CD8-positive, alpha-beta T cell (primary cell): ENCODE measurements at regions of chr12 and their contacts with region 1.

Region 1: GRCh38 chr12:53180220-53180930 is at the starts of genes CSAD and ZNF740:
- DNase-seq: peak; percentile 93 to 99 (median 98)
- ATAC-seq: peak; percentile 96
- H3K4me3 ChIP-seq: peak within 1 kb of the TSS; percentile 78 to 84
- H3K4me3 Mint-ChIP-seq: peak within 1 kb of the TSS; percentile 86
- H3K27ac ChIP-seq: peak within 1 kb of the TSS; percentile 75 to 88
- H3K27ac Mint-ChIP-seq: peak within 1 kb of the TSS; percentile 98
- H3K4me1 ChIP-seq: peaks cover 51% of the 10 kb centered on the region
- H3K4me1 Mint-ChIP-seq: peaks cover 52% of the 10 kb centered on the region
- H3K27me3 ChIP-seq: no peaks in the 10 kb centered on the region
- H3K27me3 Mint-ChIP-seq: no peaks in the 10 kb centered on the region
- CTCF ChIP-seq: no peak
- total RNA-seq, gene CSAD: 28.0 to 29.6 TPM
- total RNA-seq, gene ZNF740: 24.8 to 24.9 TPM

Region 2: DNA sequence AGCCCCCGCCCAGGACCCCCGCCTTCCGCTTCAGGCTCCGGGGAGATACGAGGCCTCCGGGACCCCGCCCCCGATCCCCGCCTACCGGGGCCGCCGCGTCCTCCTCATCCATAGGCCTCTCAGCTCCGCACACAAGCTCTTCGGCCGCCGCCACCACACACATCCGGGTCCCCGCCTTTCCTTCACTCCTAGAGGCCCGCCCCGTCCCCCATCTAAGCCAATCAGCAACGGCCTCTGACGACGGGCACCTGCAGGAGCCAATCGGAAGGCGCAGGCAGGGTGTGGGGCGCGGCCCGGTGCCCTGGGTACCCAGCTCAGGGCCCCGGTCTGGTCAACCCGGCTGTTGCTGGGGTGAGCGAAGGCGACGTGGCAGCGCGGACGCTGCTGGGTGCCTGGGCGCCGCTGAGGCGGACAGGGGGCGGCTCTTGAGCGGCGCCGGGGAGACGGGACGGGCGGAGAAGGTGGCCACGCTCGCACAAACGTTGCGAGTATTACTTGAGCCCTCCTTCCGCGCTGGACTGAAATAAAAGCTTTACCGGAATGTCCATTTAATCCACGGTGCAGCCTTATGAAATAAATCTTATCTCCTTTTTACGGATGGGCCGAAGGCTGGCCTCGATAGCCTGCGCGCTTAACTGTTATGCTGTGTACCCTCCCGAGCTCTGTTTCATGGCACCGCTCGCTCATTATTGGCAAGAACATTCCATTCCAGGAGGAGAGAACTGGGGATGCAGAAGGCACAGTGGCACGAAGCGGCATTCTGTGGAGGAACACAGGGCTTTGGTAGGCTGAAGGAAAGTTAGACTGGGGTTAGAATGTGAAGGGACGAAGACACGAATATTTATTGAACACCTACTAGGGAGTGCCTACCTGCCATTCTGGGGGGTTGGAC is 100.9 kb before region 1 on chr12 and contains the start of gene SPRYD3:
- CTCF ChIA-PET with region 1: no interaction called
- POLR2A ChIA-PET with region 1: interaction called, 5 read pairs
- intact Hi-C with region 1: loop called (anchors 1 kb)
- DNase-seq: peak; percentile 95 to 98 (median 96)
- ATAC-seq: peak; percentile 94
- H3K4me3 ChIP-seq: peak within 1 kb of the TSS; percentile 66 to 92
- H3K4me3 Mint-ChIP-seq: peak within 1 kb of the TSS; percentile 92
- H3K27ac ChIP-seq: peak within 1 kb of the TSS; percentile 75 to 89
- H3K27ac Mint-ChIP-seq: peak within 1 kb of the TSS; percentile 96
- H3K4me1 ChIP-seq: peaks cover 13% of the 10 kb centered on the region
- H3K4me1 Mint-ChIP-seq: peaks cover 41% of the 10 kb centered on the region
- H3K27me3 ChIP-seq: no peaks in the 10 kb centered on the region
- H3K27me3 Mint-ChIP-seq: no peaks in the 10 kb centered on the region
- CTCF ChIP-seq: no peak
- total RNA-seq, gene SPRYD3: 25.1 to 25.6 TPM

Region 3: GRCh38 chr12:53205747-53206419 is 25.5 kb after region 1 on chr12:
- CTCF ChIA-PET with region 1: interaction called, 10 read pairs
- POLR2A ChIA-PET with region 1: interaction called, 32 read pairs
- intact Hi-C with region 1: loop called in 1 of 2 experiments (anchors 2 kb)
- DNase-seq: peak in 8 of 9 experiments; percentile 43 to 74 (median 69)
- ATAC-seq: peak; percentile 53
- H3K4me3 ChIP-seq: peak overlapping the region; percentile 68 to 71
- H3K4me3 Mint-ChIP-seq: peak overlapping the region; percentile 84
- H3K27ac ChIP-seq: peak overlapping the region; percentile 48 to 71
- H3K27ac Mint-ChIP-seq: peak overlapping the region; percentile 90
- H3K4me1 ChIP-seq: peaks cover 70% of the 10 kb centered on the region
- H3K4me1 Mint-ChIP-seq: peaks cover 71% of the 10 kb centered on the region
- H3K27me3 ChIP-seq: no peaks in the 10 kb centered on the region
- H3K27me3 Mint-ChIP-seq: no peaks in the 10 kb centered on the region
- CTCF ChIP-seq: no peak

Region 4: GRCh38 chr12:53251477-53252348 is 71.3 kb after region 1 on chr12:
- CTCF ChIA-PET with region 1: interaction called, 5 read pairs
- POLR2A ChIA-PET with region 1: interaction called, 3 read pairs
- intact Hi-C with region 1: loop called in 1 of 2 experiments (anchors 1 kb)
- DNase-seq: peak; percentile 28 to 85 (median 71)
- ATAC-seq: peak; percentile 87
- H3K4me3 ChIP-seq: peak overlapping the region; percentile 71 to 86
- H3K4me3 Mint-ChIP-seq: peak overlapping the region; percentile 98
- H3K27ac ChIP-seq: peak overlapping the region; percentile 70 to 80
- H3K27ac Mint-ChIP-seq: peak overlapping the region; percentile 96
- H3K4me1 ChIP-seq: peaks cover 46% of the 10 kb centered on the region
- H3K4me1 Mint-ChIP-seq: peaks cover 50% of the 10 kb centered on the region
- H3K27me3 ChIP-seq: no peaks in the 10 kb centered on the region
- H3K27me3 Mint-ChIP-seq: no peaks in the 10 kb centered on the region
- CTCF ChIP-seq: peak; percentile 40

Region 5: GRCh38 chr12:53321074-53321814 is 140.9 kb after region 1 on chr12 and contains the start of gene AAAS:
- CTCF ChIA-PET with region 1: interaction called, 5 read pairs
- POLR2A ChIA-PET with region 1: interaction called, 6 read pairs
- intact Hi-C with region 1: loop called (anchors 1 kb)
- DNase-seq: peak; percentile 85 to 97 (median 95)
- ATAC-seq: peak; percentile 82
- H3K4me3 ChIP-seq: peak within 1 kb of the TSS; percentile 67 to 99
- H3K4me3 Mint-ChIP-seq: peak within 1 kb of the TSS; percentile 97
- H3K27ac ChIP-seq: peak within 1 kb of the TSS; percentile 67 to 80
- H3K27ac Mint-ChIP-seq: peak within 1 kb of the TSS; percentile 92
- H3K4me1 ChIP-seq: peaks cover 31% of the 10 kb centered on the region
- H3K4me1 Mint-ChIP-seq: peaks cover 42% of the 10 kb centered on the region
- H3K27me3 ChIP-seq: no peaks in the 10 kb centered on the region
- H3K27me3 Mint-ChIP-seq: no peaks in the 10 kb centered on the region
- CTCF ChIP-seq: peak; percentile 99
- total RNA-seq, gene AAAS: 17.0 to 21.5 TPM

Region 6: DNA sequence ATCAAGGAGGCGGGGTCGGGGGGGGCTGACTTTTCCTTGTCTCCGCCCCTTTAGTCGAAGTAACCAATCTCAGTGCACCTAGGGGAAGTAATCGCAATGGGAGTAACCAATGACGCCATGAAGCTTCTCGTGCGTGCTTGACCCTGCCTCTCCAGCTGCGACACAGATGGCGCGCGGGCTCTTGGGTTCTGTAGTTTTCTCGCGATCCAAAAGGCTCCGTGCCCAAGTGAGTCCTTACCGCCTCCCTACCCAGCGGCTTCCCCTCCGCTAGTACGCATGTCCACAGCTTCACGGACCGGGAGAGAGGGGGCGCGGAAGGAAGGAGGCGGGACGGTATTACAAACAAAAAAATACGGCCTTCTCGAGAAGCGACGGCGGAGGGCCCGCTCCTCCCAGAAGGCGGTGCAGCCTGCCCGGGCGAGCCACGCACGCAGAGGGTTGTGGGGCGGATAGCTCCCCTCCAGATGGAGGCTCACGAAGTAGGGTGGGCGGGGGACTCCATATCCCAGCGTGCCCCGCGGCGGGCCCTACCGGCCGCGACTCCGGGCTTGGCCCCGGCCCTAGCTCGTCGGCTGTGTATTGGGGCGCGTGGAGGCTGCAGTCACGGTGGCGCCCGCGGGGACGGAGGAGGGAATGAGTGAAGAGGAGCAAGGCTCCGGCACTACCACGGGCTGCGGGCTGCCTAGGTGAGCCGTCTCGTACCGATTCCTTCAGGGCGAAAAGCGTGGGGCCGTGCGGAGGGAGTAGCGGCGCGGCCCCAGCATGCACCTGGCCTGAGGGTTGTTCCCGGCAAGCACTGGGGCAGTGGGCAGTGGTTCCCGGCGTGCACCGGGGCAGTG is 320.6 kb after region 1 on chr12 and contains the start of gene TARBP2:
- CTCF ChIA-PET with region 1: no interaction called
- POLR2A ChIA-PET with region 1: interaction called, 3 read pairs
- intact Hi-C with region 1: loop called in 1 of 2 experiments (anchors 1 kb)
- DNase-seq: peak; percentile 92 to 99 (median 98)
- ATAC-seq: peak; percentile 77
- H3K4me3 ChIP-seq: peak within 1 kb of the TSS; percentile 64 to 87
- H3K4me3 Mint-ChIP-seq: peak within 1 kb of the TSS; percentile 93
- H3K27ac ChIP-seq: peak within 1 kb of the TSS; percentile 90 to 95
- H3K27ac Mint-ChIP-seq: peak within 1 kb of the TSS; percentile 97
- H3K4me1 ChIP-seq: peaks cover 28% of the 10 kb centered on the region
- H3K4me1 Mint-ChIP-seq: peaks cover 48% of the 10 kb centered on the region
- H3K27me3 ChIP-seq: no peaks in the 10 kb centered on the region
- H3K27me3 Mint-ChIP-seq: no peaks in the 10 kb centered on the region
- CTCF ChIP-seq: no peak
- total RNA-seq, gene TARBP2: 22.9 to 23.9 TPM